CD14-positive monocyte (primary cell): ENCODE measurements at regions of chr21 and their contacts with region 1.

Region 1: GRCh38 chr21:17679002-17679600 is 66.4 kb upstream of the BTG3 start:
- DNase-seq: peak; percentile 33 to 71 (median 62)
- H3K4me3 ChIP-seq: no peak overlapping the region
- H3K4me3 Mint-ChIP-seq: no peak overlapping the region
- H3K27ac ChIP-seq: no peak overlapping the region
- H3K27ac Mint-ChIP-seq: no peak overlapping the region
- H3K4me1 ChIP-seq: no peaks in the 10 kb centered on the region
- H3K4me1 Mint-ChIP-seq: no peaks in the 10 kb centered on the region
- H3K27me3 ChIP-seq: no peaks in the 10 kb centered on the region
- H3K27me3 Mint-ChIP-seq: peaks cover 0 to 3% (median 0%) of the 10 kb centered on the region in 3 donors
- CTCF ChIP-seq: peak; percentile 81

Region 2: DNA sequence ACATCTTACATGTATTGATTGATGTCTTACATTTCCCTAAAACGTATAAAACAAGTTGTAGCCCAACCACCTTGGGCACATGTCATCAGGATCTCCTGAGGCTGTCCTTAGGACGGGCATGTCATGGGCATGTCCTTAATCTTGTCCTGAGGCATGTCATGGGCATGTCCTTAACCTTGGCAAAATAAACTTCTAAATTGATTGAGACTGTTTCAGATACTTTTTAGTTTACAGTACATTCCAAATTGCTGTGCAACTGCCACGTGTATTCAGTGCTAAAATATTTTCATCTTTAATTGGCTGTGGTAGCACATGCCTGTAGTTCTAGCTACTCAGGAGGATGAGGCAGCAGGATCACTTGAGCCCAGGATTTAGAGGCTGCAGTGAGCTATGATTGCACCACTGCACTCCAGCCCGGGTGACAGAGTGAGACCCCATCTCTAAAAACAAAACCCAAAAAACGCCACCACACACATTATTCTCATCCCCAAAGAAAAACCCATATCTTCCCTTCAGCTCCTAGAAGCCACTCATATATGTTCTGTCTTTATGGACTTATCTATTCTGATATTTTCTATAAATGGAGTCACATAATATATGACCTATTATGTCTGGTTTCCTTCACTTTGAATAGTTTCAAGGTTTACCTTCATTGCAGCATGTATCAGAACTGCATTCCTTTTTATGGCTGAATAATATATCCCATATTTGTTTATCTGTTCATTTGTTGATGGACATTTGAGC is 29.6 kb after region 1 on chr21:
- intact Hi-C with region 1: no loop called
- DNase-seq: no peak
- H3K4me3 ChIP-seq: no peak overlapping the region
- H3K4me3 Mint-ChIP-seq: no peak overlapping the region
- H3K27ac ChIP-seq: no peak overlapping the region
- H3K27ac Mint-ChIP-seq: no peak overlapping the region
- H3K4me1 ChIP-seq: peaks cover 0 to 3% of the 10 kb centered on the region in 2 donors
- H3K4me1 Mint-ChIP-seq: peaks cover 10% of the 10 kb centered on the region
- H3K27me3 ChIP-seq: no peaks in the 10 kb centered on the region
- H3K27me3 Mint-ChIP-seq: peaks cover 0 to 2% (median 0%) of the 10 kb centered on the region in 3 donors
- CTCF ChIP-seq: no peak

Region 3: GRCh38 chr21:17780539-17780938 is 101.4 kb after region 1 on chr21:
- intact Hi-C with region 1: no loop called
- DNase-seq: peak; percentile 55 to 89 (median 82)
- H3K4me3 ChIP-seq: peak overlapping the region in 1 of 3 experiments; percentile 29
- H3K4me3 Mint-ChIP-seq: peak overlapping the region; percentile 13 to 60
- H3K27ac ChIP-seq: peak overlapping the region; percentile 44 to 70
- H3K27ac Mint-ChIP-seq: peak overlapping the region; percentile 61 to 87 (median 79)
- H3K4me1 ChIP-seq: peaks cover 78 to 82% of the 10 kb centered on the region in 2 donors
- H3K4me1 Mint-ChIP-seq: peaks cover 78% of the 10 kb centered on the region
- H3K27me3 ChIP-seq: no peaks in the 10 kb centered on the region
- H3K27me3 Mint-ChIP-seq: peaks cover 0 to 6% (median 1%) of the 10 kb centered on the region in 3 donors
- CTCF ChIP-seq: no peak

Region 4: DNA sequence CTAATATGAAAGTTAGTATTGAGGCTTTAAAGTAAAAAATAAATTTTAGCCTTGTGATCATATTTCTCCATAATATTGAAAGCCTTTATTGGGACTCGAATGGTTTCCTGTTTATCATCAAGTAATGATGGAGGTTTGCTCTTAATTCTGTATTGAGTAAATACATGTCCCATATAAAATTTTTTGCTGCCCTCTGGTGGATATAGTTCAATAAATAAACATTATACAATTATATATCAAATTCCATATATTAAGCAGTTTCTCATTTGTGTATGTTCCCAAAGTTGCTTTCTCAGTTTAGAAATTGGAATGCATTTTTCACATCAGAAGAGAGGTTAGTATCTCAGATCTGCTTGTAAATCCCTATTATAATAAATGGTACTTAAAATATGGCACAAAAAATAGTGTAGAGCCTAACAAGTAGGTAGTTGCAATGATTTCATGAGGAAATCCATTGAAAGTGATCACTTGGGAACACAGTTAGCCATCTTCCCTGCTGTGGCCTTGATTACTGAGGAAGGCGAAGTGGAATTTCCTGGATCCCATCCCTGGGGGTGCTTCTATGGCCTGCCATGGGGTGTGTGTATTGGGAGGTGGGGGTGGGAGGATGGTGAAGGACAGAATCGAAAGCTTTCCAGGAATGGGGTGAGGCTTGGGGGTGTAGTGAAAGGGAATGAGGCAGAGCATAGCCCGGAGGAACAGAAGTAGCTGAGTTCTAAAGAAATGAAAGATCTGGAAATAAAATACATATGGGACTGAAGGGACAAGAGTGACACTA is 224.1 kb after region 1 on chr21:
- intact Hi-C with region 1: loop called (anchors 2 to 5 kb)
- DNase-seq: peak; percentile 4 to 53 (median 17)
- H3K4me3 ChIP-seq: no peak overlapping the region
- H3K4me3 Mint-ChIP-seq: no peak overlapping the region
- H3K27ac ChIP-seq: no peak overlapping the region
- H3K27ac Mint-ChIP-seq: no peak overlapping the region
- H3K4me1 ChIP-seq: no peaks in the 10 kb centered on the region
- H3K4me1 Mint-ChIP-seq: peaks cover 4% of the 10 kb centered on the region
- H3K27me3 ChIP-seq: no peaks in the 10 kb centered on the region
- H3K27me3 Mint-ChIP-seq: peaks cover 0 to 3% (median 0%) of the 10 kb centered on the region in 3 donors
- CTCF ChIP-seq: peak; percentile 65

Region 5: GRCh38 chr21:17925000-17925610 is 246.0 kb after region 1 on chr21:
- intact Hi-C with region 1: loop called in 1 of 2 experiments (anchors 5 kb)
- DNase-seq: peak; percentile 34 to 58 (median 56)
- H3K4me3 ChIP-seq: no peak overlapping the region
- H3K4me3 Mint-ChIP-seq: no peak overlapping the region
- H3K27ac ChIP-seq: no peak overlapping the region
- H3K27ac Mint-ChIP-seq: no peak overlapping the region
- H3K4me1 ChIP-seq: no peaks in the 10 kb centered on the region
- H3K4me1 Mint-ChIP-seq: no peaks in the 10 kb centered on the region
- H3K27me3 ChIP-seq: no peaks in the 10 kb centered on the region
- H3K27me3 Mint-ChIP-seq: no peaks in the 10 kb centered on the region
- CTCF ChIP-seq: peak; percentile 85

Region 6: GRCh38 chr21:18049461-18049860 is 370.4 kb after region 1 on chr21:
- intact Hi-C with region 1: no loop called
- DNase-seq: no peak
- H3K4me3 ChIP-seq: no peak overlapping the region
- H3K4me3 Mint-ChIP-seq: no peak overlapping the region
- H3K27ac ChIP-seq: no peak overlapping the region
- H3K27ac Mint-ChIP-seq: no peak overlapping the region
- H3K4me1 ChIP-seq: no peaks in the 10 kb centered on the region
- H3K4me1 Mint-ChIP-seq: no peaks in the 10 kb centered on the region
- H3K27me3 ChIP-seq: no peaks in the 10 kb centered on the region
- H3K27me3 Mint-ChIP-seq: no peaks in the 10 kb centered on the region
- CTCF ChIP-seq: no peak